ENCODE measurements at regions of chr4 and their contacts with region 1.

Region 1: DNA sequence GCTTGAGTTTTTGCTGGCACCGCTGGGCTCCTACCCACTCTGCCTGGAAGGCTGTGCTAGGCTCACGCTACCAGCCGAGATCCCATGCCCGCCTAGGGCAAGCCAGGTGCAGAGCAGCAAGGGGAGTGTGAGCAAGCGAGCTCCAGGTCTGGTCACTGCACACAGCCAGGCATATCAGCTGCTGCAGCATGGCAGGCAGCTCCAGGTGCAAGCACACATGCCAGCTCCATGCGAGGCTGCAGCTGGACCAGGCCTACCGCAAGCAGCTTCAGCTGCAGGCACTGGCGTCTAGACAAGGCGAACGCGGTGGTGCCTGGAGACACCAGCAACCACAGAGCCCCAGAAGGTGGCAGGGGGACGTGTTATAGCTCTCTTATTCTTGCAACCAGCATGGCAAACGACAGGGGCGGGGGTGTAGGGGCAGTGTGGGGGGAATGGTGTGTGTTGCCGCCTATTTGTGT is 614.7 kb upstream of the EPHA5 start:
- DNase-seq: no peak
- H3K27ac ChIP-seq: no peak overlapping the region
- CTCF ChIP-seq: no peak

Region 2: GRCh38 chr4:65696436-65696835 is 588.6 kb before region 1 on chr4:
- CTCF ChIA-PET with region 1: interaction called, 10 read pairs
- POLR2A ChIA-PET with region 1: no interaction called
- DNase-seq: no peak
- H3K27ac ChIP-seq: no peak overlapping the region
- CTCF ChIP-seq: no peak

Region 3: DNA sequence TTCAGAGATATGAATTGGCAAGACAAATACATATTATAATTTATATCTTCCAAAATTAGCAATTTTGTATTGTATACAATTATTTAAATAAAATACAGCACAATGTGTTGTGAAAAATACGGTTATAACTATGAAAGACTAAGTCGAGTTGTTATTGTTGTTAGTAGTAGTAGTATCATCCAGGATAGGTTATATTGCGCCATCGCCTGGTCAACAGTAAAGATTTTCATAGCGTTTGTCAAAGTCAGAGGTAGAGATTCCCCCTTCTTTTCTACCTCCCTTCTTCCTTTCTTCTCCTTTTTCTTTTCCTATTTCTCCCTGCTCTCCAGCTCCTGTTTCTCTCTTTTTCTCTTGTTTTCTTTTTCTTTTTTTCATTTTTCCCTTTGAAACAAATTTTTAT is 115.7 kb before region 1 on chr4:
- CTCF ChIA-PET with region 1: no interaction called
- POLR2A ChIA-PET with region 1: no interaction called
- DNase-seq: peak; percentile 1
- H3K27ac ChIP-seq: no peak overlapping the region
- CTCF ChIP-seq: peak; percentile 17; the same call in 1 of the 2 replicates